Gastrocnemius medialis (tissue), 4 donors: ENCODE measurements at regions of chr2 and their contacts with region 1.

Region 1: GRCh38 chr2:112259509-112260294 is 4.9 kb upstream of the ZC3H8 start:
- DNase-seq: peak; percentile 58 to 79
- ATAC-seq: peak; percentile 71 to 74
- H3K4me3 ChIP-seq: peak overlapping the region in 1 of 4 donors; percentile 27
- H3K27ac ChIP-seq: no peak overlapping the region
- H3K4me1 ChIP-seq: peaks cover 5 to 6% of the 10 kb centered on the region in 2 donors
- H3K27me3 ChIP-seq: no peaks in the 10 kb centered on the region
- CTCF ChIP-seq: peak; percentile 86 to 96 (median 92)
- POLR2A ChIP-seq: no peak

Region 2: GRCh38 chr2:112121682-112122254 is 137.9 kb before region 1 on chr2:
- in situ Hi-C with region 1: no loop called
- intact Hi-C with region 1: no loop called
- DNase-seq: no peak
- ATAC-seq: no peak
- H3K4me3 ChIP-seq: no peak overlapping the region
- H3K27ac ChIP-seq: no peak overlapping the region
- H3K4me1 ChIP-seq: no peaks in the 10 kb centered on the region
- H3K27me3 ChIP-seq: no peaks in the 10 kb centered on the region
- CTCF ChIP-seq: peak in 4 of 5 experiments; percentile 39 to 57 (median 53)
- POLR2A ChIP-seq: no peak

Region 3: GRCh38 chr2:112321375-112322320 is 61.9 kb after region 1 on chr2:
- in situ Hi-C with region 1: loop called in 1 of 4 experiments (anchors 10 kb)
- intact Hi-C with region 1: no loop called
- DNase-seq: no peak
- ATAC-seq: no peak
- H3K4me3 ChIP-seq: no peak overlapping the region
- H3K27ac ChIP-seq: no peak overlapping the region
- H3K4me1 ChIP-seq: no peaks in the 10 kb centered on the region
- H3K27me3 ChIP-seq: no peaks in the 10 kb centered on the region
- CTCF ChIP-seq: no peak
- POLR2A ChIP-seq: no peak